CD8-positive, alpha-beta memory T cell (primary cell): ENCODE measurements at regions of chr12 and their contacts with region 1.

Region 1: DNA sequence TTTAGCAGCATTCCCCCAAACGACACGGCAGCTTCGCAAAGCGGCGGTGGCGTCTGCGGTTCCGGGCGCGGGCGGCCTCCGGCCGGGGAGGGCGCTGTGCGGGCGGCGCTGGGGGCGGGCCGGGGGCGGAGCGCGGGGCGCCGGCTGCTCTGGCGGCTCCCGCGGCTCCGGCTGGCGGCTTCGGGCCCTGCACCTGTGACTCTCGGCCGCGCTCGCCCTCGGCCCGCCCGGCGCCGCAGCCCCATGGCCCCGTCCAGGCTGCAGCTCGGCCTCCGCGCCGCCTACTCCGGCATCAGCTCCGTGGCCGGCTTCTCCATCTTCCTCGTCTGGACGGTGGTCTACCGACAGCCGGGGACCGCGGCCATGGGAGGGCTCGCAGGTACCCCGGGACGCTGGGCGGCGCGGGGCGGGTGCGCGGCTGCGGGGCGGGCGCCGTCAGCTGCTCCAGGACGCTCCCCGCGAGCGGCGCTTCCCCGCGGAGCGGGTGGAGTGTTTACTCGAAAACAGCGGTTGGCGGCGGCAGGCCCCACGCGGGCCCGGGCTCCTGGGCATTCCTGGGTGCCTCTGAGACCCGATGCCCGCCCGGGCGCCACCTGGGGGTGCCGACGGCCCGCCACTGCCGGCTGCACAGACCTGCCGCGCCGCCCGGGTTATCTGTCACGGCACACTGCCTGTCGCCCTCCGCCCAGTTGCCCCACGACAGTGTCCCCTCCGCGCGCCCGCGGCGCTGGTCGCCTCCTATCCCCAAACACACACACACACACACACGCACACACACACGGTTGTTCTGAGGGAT is at the start of gene SLC48A1:
- DNase-seq: peak; percentile 59 to 79 (median 71)
- H3K4me3 ChIP-seq: peak within 1 kb of the TSS; percentile 54
- H3K4me3 Mint-ChIP-seq: peak within 1 kb of the TSS; percentile 84 to 92 (median 86)
- H3K27ac ChIP-seq: peak within 1 kb of the TSS; percentile 74
- H3K27ac Mint-ChIP-seq: peak within 1 kb of the TSS in 7 of 8 donors; percentile 51 to 88 (median 73)
- H3K4me1 ChIP-seq: peaks cover 15% of the 10 kb centered on the region
- H3K4me1 Mint-ChIP-seq: peaks cover 14 to 18% (median 16%) of the 10 kb centered on the region in 3 donors
- H3K27me3 ChIP-seq: no peaks in the 10 kb centered on the region
- H3K27me3 Mint-ChIP-seq: peaks cover 0 to 4% of the 10 kb centered on the region in 2 donors
- total RNA-seq, gene SLC48A1: 10.9 to 11.5 TPM

Region 2: GRCh38 chr12:47433876-47434275 is 339.4 kb before region 1 on chr12:
- CTCF ChIA-PET with region 1: no interaction called
- POLR2A ChIA-PET with region 1: no interaction called
- DNase-seq: no peak
- H3K4me3 ChIP-seq: no peak overlapping the region
- H3K4me3 Mint-ChIP-seq: no peak overlapping the region
- H3K27ac ChIP-seq: no peak overlapping the region
- H3K27ac Mint-ChIP-seq: no peak overlapping the region
- H3K4me1 ChIP-seq: no peaks in the 10 kb centered on the region
- H3K4me1 Mint-ChIP-seq: no peaks in the 10 kb centered on the region
- H3K27me3 ChIP-seq: no peaks in the 10 kb centered on the region
- H3K27me3 Mint-ChIP-seq: peaks cover 0 to 15% of the 10 kb centered on the region in 2 donors

Region 3: GRCh38 chr12:47828608-47829536 is 55.6 kb after region 1 on chr12:
- CTCF ChIA-PET with region 1: interaction called, 147 read pairs
- POLR2A ChIA-PET with region 1: no interaction called
- DNase-seq: no peak
- H3K4me3 ChIP-seq: no peak overlapping the region
- H3K4me3 Mint-ChIP-seq: no peak overlapping the region
- H3K27ac ChIP-seq: peak overlapping the region; percentile 28
- H3K27ac Mint-ChIP-seq: peak overlapping the region in 2 of 8 donors; percentile 11 to 61
- H3K4me1 ChIP-seq: peaks cover 94% of the 10 kb centered on the region
- H3K4me1 Mint-ChIP-seq: peaks cover 56 to 80% (median 76%) of the 10 kb centered on the region in 3 donors
- H3K27me3 ChIP-seq: no peaks in the 10 kb centered on the region
- H3K27me3 Mint-ChIP-seq: no peaks in the 10 kb centered on the region